ENCODE measurements at regions of chr4 and their contacts with region 1.

Region 1: GRCh38 chr4:37826295-37827029 is at the start of gene PGM2:
- DNase-seq: peak; percentile 95
- H3K4me3 ChIP-seq: peak within 1 kb of the TSS; percentile 68 to 90 (median 87)
- H3K27ac ChIP-seq: peak within 1 kb of the TSS; percentile 83 to 92 (median 90)
- H3K4me1 ChIP-seq: peaks cover 18 to 37% (median 27%) of the 10 kb centered on the region in 4 donors
- H3K27me3 ChIP-seq: no peaks in the 10 kb centered on the region
- CTCF ChIP-seq: peak in 2 of 3 experiments; percentile 7 to 16
- EP300 ChIP-seq: no peak
- POLR2A ChIP-seq: peak; percentile 19
- total RNA-seq, gene PGM2: 17.4 to 19.2 (median 18.8) TPM

Region 2: GRCh38 chr4:37686373-37687193 is 139.9 kb before region 1 on chr4 and contains the start of gene RELL1:
- intact Hi-C with region 1: loop called (anchors 10 kb)
- DNase-seq: peak; percentile 100
- H3K4me3 ChIP-seq: peak within 1 kb of the TSS; percentile 85 to 99 (median 96)
- H3K27ac ChIP-seq: peak within 1 kb of the TSS; percentile 96 to 99 (median 99)
- H3K4me1 ChIP-seq: peaks cover 18 to 47% (median 39%) of the 10 kb centered on the region in 4 donors
- H3K27me3 ChIP-seq: no peaks in the 10 kb centered on the region
- CTCF ChIP-seq: no peak
- EP300 ChIP-seq: no peak
- POLR2A ChIP-seq: no peak
- total RNA-seq, gene RELL1: 44.4 to 83.3 (median 73.6) TPM

Region 3: GRCh38 chr4:37873386-37873785 is 46.9 kb after region 1 on chr4:
- intact Hi-C with region 1: loop called (anchors 5 kb)
- DNase-seq: no peak
- H3K4me3 ChIP-seq: no peak overlapping the region
- H3K27ac ChIP-seq: peak overlapping the region; percentile 69 to 82 (median 73)
- H3K4me1 ChIP-seq: peaks cover 7 to 58% (median 49%) of the 10 kb centered on the region in 4 donors
- H3K27me3 ChIP-seq: no peaks in the 10 kb centered on the region
- CTCF ChIP-seq: no peak
- EP300 ChIP-seq: peak; percentile 24
- POLR2A ChIP-seq: no peak

Region 4: GRCh38 chr4:37891260-37892159 is 65.0 kb after region 1 on chr4:
- intact Hi-C with region 1: loop called (anchors 5 kb)
- DNase-seq: no peak
- H3K4me3 ChIP-seq: peak overlapping the region; percentile 95 to 99 (median 96)
- H3K27ac ChIP-seq: peak overlapping the region; percentile 94 to 98 (median 97)
- H3K4me1 ChIP-seq: peaks cover 18 to 71% (median 55%) of the 10 kb centered on the region in 4 donors
- H3K27me3 ChIP-seq: no peaks in the 10 kb centered on the region
- CTCF ChIP-seq: peak in 1 of 3 experiments; percentile 32
- EP300 ChIP-seq: no peak
- POLR2A ChIP-seq: no peak

Measured in esophagus muscularis mucosa (tissue), 4 donors.